ENCODE measurements at regions of chr1 and their contacts with region 1.

Region 1: GRCh38 chr1:93447516-93448291 is at the start of gene FNBP1L:
- DNase-seq: peak; percentile 62 to 63
- ATAC-seq: peak; percentile 59
- H3K4me3 ChIP-seq: peak within 1 kb of the TSS; percentile 84 to 94 (median 90)
- H3K27ac ChIP-seq: peak within 1 kb of the TSS; percentile 85 to 98 (median 88)
- H3K4me1 ChIP-seq: peaks cover 14 to 15% of the 10 kb centered on the region in 2 donors
- H3K27me3 ChIP-seq: no peaks in the 10 kb centered on the region
- CTCF ChIP-seq: no peak
- POLR2A ChIP-seq: peak; percentile 82 to 83
- total RNA-seq, gene FNBP1L: 16.0 to 35.1 (median 17.4) TPM

Region 2: DNA sequence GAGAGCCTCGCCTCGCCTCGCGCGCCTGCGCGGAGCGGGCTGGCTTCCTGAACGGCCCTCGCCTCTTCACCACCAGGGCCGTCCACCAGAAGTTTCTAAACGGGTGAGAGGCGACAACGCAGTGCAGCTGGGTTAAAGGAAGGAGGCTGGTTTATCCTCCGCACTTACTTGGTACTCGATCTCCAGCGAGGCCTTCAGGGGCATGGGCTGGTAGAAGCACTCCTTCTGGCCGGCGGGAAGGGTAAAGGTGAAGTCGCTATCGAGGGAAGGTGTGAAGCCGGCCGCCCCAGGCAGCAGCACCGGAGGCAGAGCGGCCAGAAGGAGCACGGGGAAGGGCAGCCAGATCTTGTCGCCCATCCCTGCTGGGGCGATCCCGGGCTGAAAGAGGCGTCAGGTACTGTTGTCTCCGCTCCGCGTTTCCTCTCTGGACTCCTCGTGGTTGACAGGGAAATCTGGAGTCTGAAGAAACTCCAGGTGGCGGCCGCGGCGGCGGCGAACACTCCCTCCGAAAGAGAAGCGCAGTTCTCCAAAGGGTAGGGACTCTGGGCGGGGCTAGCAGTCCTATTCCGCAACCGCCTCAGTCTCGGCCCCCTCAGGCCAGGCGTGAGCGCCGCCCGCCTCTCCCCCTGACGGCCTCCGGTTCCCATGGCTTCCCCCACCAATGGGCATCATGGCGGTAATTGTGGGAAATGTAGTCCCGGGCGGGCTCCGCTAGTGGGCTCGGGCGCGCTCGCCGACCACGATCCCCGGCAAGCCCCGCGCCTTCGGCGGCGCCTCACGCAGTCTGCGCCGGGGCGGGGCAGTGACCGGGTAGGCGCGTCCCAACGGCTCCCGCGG is 267.6 kb before region 1 on chr1 and contains the start of gene TMED5:
- in situ Hi-C with region 1: no loop called
- intact Hi-C with region 1: loop called (anchors 2 kb)
- DNase-seq: peak; percentile 98
- ATAC-seq: peak; percentile 90 to 95
- H3K4me3 ChIP-seq: peak within 1 kb of the TSS; percentile 92 to 99 (median 94)
- H3K27ac ChIP-seq: peak within 1 kb of the TSS; percentile 93 to 100 (median 100)
- H3K4me1 ChIP-seq: peaks cover 24 to 28% of the 10 kb centered on the region in 2 donors
- H3K27me3 ChIP-seq: no peaks in the 10 kb centered on the region
- CTCF ChIP-seq: peak in 4 of 5 experiments; percentile 10 to 31 (median 26)
- POLR2A ChIP-seq: peak; percentile 96
- total RNA-seq, gene TMED5: 99.5 to 150 (median 127) TPM

Region 3: GRCh38 chr1:93235271-93235670 is 212.4 kb before region 1 on chr1:
- in situ Hi-C with region 1: no loop called
- intact Hi-C with region 1: no loop called
- DNase-seq: no peak
- ATAC-seq: no peak
- H3K4me3 ChIP-seq: no peak overlapping the region
- H3K27ac ChIP-seq: no peak overlapping the region
- H3K4me1 ChIP-seq: no peaks in the 10 kb centered on the region
- H3K27me3 ChIP-seq: no peaks in the 10 kb centered on the region
- CTCF ChIP-seq: no peak
- POLR2A ChIP-seq: no peak

Region 4: DNA sequence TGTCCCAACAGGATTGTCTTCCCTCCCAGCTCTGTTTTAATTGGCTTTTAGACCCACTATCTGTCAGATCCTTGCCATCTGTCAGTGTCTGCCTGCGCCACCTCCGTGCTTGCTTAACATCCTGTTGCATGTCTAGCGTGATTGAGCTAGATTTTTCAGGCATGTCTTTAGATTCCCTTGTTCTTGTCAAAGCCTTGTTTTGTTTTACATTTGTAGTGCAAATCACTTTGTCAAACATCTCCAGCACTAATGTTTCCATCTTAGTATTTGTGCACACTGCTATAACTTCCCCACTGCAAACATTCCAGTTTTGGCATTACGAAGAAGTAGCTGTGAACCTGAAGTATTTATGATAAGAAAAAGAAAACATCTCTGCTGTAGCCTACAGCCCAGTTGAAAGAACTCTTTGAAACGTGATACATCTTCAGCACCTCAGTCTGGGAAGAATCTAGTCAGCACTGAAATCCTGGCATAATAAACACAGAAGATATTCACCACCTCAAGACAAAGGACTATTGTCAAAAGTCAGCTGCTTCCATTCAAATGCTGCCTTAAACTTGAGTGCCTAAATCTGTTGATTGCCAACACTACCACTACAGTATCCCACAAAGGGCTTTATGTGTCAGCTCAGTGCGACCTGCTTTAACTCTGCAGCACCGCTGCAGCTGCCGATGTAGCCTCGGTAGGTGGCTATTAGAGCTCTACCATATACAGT is 105.2 kb after region 1 on chr1:
- in situ Hi-C with region 1: no loop called
- intact Hi-C with region 1: loop called (anchors 5 kb)
- DNase-seq: no peak
- ATAC-seq: peak; percentile 55 to 63
- H3K4me3 ChIP-seq: no peak overlapping the region
- H3K27ac ChIP-seq: peak overlapping the region; percentile 71 to 80 (median 76)
- H3K4me1 ChIP-seq: peaks cover 41 to 51% of the 10 kb centered on the region in 2 donors
- H3K27me3 ChIP-seq: no peaks in the 10 kb centered on the region
- CTCF ChIP-seq: no peak
- POLR2A ChIP-seq: no peak

Region 5: DNA sequence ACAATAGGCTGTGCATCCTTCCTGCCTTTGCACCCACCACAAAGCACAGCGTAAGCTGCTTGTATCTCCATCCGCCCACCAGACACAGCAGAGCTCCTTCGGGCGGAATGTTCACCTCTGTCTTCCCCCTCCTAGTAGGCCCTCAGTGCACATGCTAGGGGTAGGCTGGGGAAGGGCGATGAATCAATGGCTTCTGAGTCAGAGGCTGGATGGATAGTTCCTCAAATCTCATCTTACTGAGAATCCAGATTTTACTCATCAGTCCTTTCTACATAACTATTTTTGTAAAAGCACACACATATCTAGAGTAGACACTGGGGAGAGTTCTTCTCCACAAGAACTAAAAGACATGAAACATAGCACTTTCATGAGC is 160.1 kb after region 1 on chr1:
- in situ Hi-C with region 1: loop called in 3 of 4 experiments (anchors 10 kb)
- intact Hi-C with region 1: loop called (anchors 5 kb)
- DNase-seq: no peak
- ATAC-seq: no peak
- H3K4me3 ChIP-seq: no peak overlapping the region
- H3K27ac ChIP-seq: peak overlapping the region; percentile 84 to 90 (median 87)
- H3K4me1 ChIP-seq: peaks cover 84 to 98% of the 10 kb centered on the region in 2 donors
- H3K27me3 ChIP-seq: no peaks in the 10 kb centered on the region
- CTCF ChIP-seq: no peak
- POLR2A ChIP-seq: no peak

Region 6: DNA sequence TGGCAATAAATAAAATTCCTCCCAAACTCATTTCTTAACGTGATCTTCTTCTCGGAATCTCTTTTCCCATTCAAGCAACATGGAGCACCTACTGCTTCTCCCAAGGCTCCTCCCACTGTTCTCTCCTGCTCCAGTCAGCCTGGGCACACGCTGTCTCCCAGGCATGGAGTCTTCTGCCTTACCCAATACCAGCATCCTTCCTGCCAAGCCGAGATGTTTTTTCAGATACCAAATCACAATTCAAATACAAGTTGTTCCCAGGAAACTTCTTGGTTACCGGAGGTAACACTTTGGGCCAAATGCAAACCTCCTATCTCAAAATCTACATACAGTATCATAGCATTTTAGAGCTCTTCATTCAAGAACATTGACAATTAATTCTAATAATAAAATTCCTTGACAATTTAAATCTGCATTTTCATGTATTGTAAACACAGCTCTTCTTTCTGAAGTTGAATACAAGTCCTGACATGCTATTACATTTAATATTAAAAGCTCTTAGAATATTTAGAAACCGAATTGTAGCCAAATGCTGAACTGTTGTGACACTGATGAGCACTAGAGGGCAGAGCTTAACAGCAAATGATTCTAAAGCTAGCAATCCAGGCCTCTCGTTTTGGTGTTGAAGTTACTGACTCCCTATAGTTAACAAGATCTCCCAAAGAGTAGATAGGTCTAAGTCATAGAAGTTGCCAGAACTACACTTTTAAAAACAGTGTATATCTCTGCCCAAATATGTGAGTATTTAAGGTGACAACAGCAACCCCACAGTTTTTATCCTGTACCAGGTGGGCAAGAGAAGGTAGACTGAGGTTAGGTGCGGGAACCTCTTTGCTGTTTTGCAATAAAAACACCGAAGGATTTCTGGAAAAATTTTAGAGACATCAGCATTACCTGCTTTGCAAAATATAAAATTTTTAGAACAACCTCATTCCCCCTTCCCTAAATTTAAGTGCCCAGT is 181.7 kb after region 1 on chr1:
- in situ Hi-C with region 1: loop called in 1 of 4 experiments (anchors 10 kb)
- intact Hi-C with region 1: no loop called
- DNase-seq: peak; percentile 55 to 62
- ATAC-seq: peak; percentile 83 to 90
- H3K4me3 ChIP-seq: no peak overlapping the region
- H3K27ac ChIP-seq: peak overlapping the region in 3 of 4 donors; percentile 18 to 77 (median 37)
- H3K4me1 ChIP-seq: peaks cover under 1 to 8% of the 10 kb centered on the region in 2 donors
- H3K27me3 ChIP-seq: no peaks in the 10 kb centered on the region
- CTCF ChIP-seq: peak; percentile 75 to 93 (median 80)
- POLR2A ChIP-seq: no peak